Activated T-helper 2 cell treated with anti-CD3 and anti-CD28 coated beads, Interferon-gamma antibody, Interleukin-2, Interleukin-4, amounts not matched to agents 10 μg/mL and 5 μg/mL and 100 μg/mL, durations not matched to agents 14 hours and 24 hours and 36 hours (primary cell): ENCODE measurements at regions of chr20 and their contacts with region 1.

Region 1: GRCh38 chr20:44966030-44966961 is at the start of gene STK4:
- DNase-seq: peak; percentile 94
- H3K4me3 Mint-ChIP-seq: peak within 1 kb of the TSS; percentile 99
- H3K27ac Mint-ChIP-seq: peak within 1 kb of the TSS; percentile 94
- H3K4me1 Mint-ChIP-seq: peaks cover 57% of the 10 kb centered on the region
- H3K27me3 Mint-ChIP-seq: no peaks in the 10 kb centered on the region
- total RNA-seq, gene STK4: 147 and 149 TPM in 2 replicates

Region 2: GRCh38 chr20:44642203-44643153 is 323.8 kb before region 1 on chr20:
- intact Hi-C with region 1: loop called (anchors 5 kb)
- DNase-seq: no peak
- H3K4me3 Mint-ChIP-seq: peak overlapping the region; percentile 14
- H3K27ac Mint-ChIP-seq: peak overlapping the region; percentile 87
- H3K4me1 Mint-ChIP-seq: peaks cover 60% of the 10 kb centered on the region
- H3K27me3 Mint-ChIP-seq: no peaks in the 10 kb centered on the region

Region 3: GRCh38 chr20:44885392-44886265 is 80.7 kb before region 1 on chr20 and contains the start of gene YWHAB:
- intact Hi-C with region 1: loop called (anchors 2 kb)
- DNase-seq: peak; percentile 97
- H3K4me3 Mint-ChIP-seq: peak within 1 kb of the TSS; percentile 97
- H3K27ac Mint-ChIP-seq: peak within 1 kb of the TSS; percentile 91
- H3K4me1 Mint-ChIP-seq: peaks cover 48% of the 10 kb centered on the region
- H3K27me3 Mint-ChIP-seq: peaks cover 1% of the 10 kb centered on the region
- total RNA-seq, gene YWHAB: 221 and 225 TPM in 2 replicates

Region 4: DNA sequence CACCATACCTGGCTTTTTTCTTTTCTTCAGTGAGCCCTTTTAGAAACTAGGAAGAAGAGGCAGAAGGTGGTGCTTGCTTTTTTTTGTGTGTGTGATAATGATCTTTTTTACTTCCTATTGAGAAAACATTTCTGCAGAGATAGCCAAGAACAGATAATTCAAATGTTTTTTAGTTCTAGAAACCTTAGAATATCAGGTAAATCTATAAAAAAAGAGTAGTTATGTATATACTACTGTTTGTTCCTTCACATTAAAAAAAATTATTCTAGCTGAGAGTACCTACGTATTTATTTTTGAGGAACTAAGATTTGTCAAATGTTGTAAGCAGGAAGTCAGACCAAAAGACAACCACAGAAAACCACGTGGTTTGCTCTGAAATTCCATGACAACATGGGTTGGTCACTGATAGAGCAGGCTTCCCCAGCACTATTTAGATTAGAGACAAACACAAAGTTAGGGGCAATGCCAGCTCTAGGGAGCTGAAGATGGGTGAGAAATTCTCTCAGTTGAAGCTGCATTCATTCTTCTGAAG is 12.9 kb after region 1 on chr20:
- intact Hi-C with region 1: loop called (anchors 1 kb)
- DNase-seq: peak; percentile 67
- H3K4me3 Mint-ChIP-seq: peak overlapping the region; percentile 69
- H3K27ac Mint-ChIP-seq: peak overlapping the region; percentile 94
- H3K4me1 Mint-ChIP-seq: peaks cover 67% of the 10 kb centered on the region
- H3K27me3 Mint-ChIP-seq: no peaks in the 10 kb centered on the region

Region 5: DNA sequence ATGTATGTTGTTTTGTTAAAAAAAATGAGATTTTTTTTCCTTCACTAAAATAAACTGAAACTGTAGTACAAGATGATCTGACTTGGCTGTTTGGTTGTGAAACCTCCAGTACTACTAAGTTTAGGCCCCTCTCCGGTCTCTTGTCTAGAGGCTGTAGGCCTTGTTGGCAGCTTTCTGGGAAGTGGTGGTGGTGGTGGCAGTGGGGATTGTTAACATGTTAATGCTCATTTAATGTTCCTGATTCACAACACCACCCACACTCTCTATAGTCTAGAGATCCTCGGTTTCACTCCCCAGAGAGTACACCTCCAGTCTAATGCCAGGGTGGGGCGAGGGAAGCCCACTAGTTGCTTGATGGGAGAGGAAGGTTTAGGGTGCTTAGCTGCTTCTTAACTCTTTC is 24.1 kb after region 1 on chr20:
- intact Hi-C with region 1: loop called (anchors 1 kb)
- DNase-seq: no peak
- H3K4me3 Mint-ChIP-seq: peak overlapping the region; percentile 74
- H3K27ac Mint-ChIP-seq: peak overlapping the region; percentile 90
- H3K4me1 Mint-ChIP-seq: peaks cover 66% of the 10 kb centered on the region
- H3K27me3 Mint-ChIP-seq: no peaks in the 10 kb centered on the region

Region 6: GRCh38 chr20:45052698-45053429 is 86.6 kb after region 1 on chr20:
- intact Hi-C with region 1: loop called (anchors 5 kb)
- DNase-seq: no peak
- H3K4me3 Mint-ChIP-seq: no peak overlapping the region
- H3K27ac Mint-ChIP-seq: peak overlapping the region; percentile 73
- H3K4me1 Mint-ChIP-seq: peaks cover 56% of the 10 kb centered on the region
- H3K27me3 Mint-ChIP-seq: no peaks in the 10 kb centered on the region

Region 7: DNA sequence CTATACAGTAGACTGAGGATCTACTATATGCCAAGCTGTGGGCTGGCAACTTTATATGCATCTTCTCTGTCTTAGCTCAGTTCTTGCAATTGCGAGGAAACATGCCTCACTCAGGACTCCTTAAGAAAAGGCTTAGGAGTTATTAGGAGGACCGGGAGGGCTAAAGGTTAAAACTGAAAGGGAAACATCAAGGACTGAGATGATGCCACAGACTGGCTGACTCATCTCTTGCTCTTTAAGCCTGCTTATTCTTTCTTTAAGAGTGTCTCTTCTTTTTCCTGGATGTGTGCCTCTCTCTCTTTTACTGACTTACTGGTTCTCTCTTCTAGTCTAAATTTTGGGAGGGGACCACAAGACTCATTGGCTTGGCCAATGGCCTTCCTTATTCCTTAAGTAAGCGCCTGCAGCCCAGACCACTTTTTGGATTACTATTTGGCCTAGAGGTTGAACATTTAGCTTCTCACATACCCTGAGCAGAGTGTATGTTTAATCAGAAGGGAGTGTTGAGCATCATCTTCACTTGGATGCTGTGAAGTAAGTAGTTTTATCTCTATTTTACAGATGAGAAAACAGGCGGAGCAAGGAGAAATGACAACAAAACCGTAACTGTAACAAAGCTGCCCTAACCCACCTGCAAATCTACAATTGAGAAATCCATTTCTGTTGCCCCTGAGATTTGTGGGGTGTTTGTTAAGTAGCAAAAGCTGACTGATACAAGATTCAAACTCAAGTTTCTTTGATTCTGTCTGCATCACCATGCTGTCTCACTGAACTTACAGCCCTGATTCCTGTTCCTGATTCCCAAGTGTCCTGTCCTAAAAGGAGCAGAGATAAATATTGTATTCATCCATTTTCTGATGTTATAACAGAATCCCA is 389.2 kb after region 1 on chr20:
- intact Hi-C with region 1: loop called (anchors 2 kb)
- DNase-seq: no peak
- H3K4me3 Mint-ChIP-seq: peak overlapping the region; percentile 58
- H3K27ac Mint-ChIP-seq: peak overlapping the region; percentile 87
- H3K4me1 Mint-ChIP-seq: peaks cover 57% of the 10 kb centered on the region
- H3K27me3 Mint-ChIP-seq: no peaks in the 10 kb centered on the region